ENCODE measurements at regions of chr6 and their contacts with region 1.

Region 1: GRCh38 chr6:32894080-32895005 is 40.4 kb downstream of the PSMB9 start:
- DNase-seq: peak; percentile 96
- ATAC-seq: peak; percentile 99
- H3K4me3 Mint-ChIP-seq: peak overlapping the region; percentile 93
- H3K27ac Mint-ChIP-seq: peak overlapping the region; percentile 94
- H3K4me1 Mint-ChIP-seq: peaks cover 25% of the 10 kb centered on the region
- H3K27me3 Mint-ChIP-seq: no peaks in the 10 kb centered on the region

Region 2: GRCh38 chr6:32940656-32941213 is 46.4 kb after region 1 on chr6 and contains the start of gene HLA-DMB:
- CTCF ChIA-PET with region 1: interaction called, 3 read pairs
- POLR2A ChIA-PET with region 1: interaction called, 3 read pairs
- intact Hi-C with region 1: loop called in 1 of 2 experiments (anchors 5 kb)
- DNase-seq: peak; percentile 58
- ATAC-seq: peak; percentile 87
- H3K4me3 Mint-ChIP-seq: peak within 1 kb of the TSS; percentile 72
- H3K27ac Mint-ChIP-seq: peak within 1 kb of the TSS; percentile 87
- H3K4me1 Mint-ChIP-seq: peaks cover 55% of the 10 kb centered on the region
- H3K27me3 Mint-ChIP-seq: no peaks in the 10 kb centered on the region
- total RNA-seq, gene HLA-DMB: 1.9 to 2.3 TPM